ENCODE measurements at regions of chr1 and their contacts with region 1.

Region 1: GRCh38 chr1:160607011-160607671 is 27.8 kb upstream of the CD84 start:
- ATAC-seq: peak; percentile 75 to 96 (median 85)
- H3K4me3 ChIP-seq: no peak overlapping the region
- H3K27ac ChIP-seq: no peak overlapping the region
- H3K4me1 ChIP-seq: peaks cover 0 to 11% of the 10 kb centered on the region in 2 donors

Region 2: GRCh38 chr1:160428655-160429054 is 178.5 kb before region 1 on chr1:
- in situ Hi-C with region 1: loop called in 1 of 9 experiments (anchors 10 kb)
- ATAC-seq: peak; percentile 64 to 94 (median 78)
- H3K4me3 ChIP-seq: no peak overlapping the region
- H3K27ac ChIP-seq: no peak overlapping the region
- H3K4me1 ChIP-seq: peaks cover 8 to 10% of the 10 kb centered on the region in 2 donors

Region 3: GRCh38 chr1:160711602-160712311 is 104.6 kb after region 1 on chr1 and contains the start of gene CD48:
- in situ Hi-C with region 1: loop called in 1 of 9 experiments (anchors 25 kb)
- ATAC-seq: peak in 1 of 8 experiments; percentile 34
- H3K4me3 ChIP-seq: no peak within 1 kb of the TSS
- H3K27ac ChIP-seq: no peak within 1 kb of the TSS
- H3K4me1 ChIP-seq: no peaks in the 10 kb centered on the region
- total RNA-seq, gene CD48: 0.05 to 1.3 (median 0.32) TPM in 4 of 8 experiments, not detected in the others

Region 4: DNA sequence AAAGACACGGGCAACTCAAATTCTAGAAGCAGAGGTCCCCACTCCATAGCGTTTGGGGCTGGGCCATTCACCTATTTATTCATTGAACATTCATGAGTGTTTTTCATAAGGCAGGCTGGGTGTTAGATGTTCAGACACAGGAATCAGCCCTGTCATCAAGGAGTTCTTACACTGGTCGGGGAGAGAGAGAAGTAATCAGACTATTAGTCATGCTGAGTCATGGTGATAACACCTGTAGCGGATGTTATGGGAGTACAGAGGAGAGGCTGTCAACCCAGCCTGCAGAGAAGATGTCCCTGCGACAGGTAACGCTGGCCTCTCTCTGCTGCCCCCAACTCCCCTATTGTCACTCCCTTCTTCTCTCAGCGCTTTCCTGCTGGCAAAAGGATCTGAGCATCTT is 206.1 kb after region 1 on chr1:
- in situ Hi-C with region 1: no loop called
- ATAC-seq: peak in 1 of 8 experiments; percentile 34
- H3K4me3 ChIP-seq: no peak overlapping the region
- H3K27ac ChIP-seq: no peak overlapping the region
- H3K4me1 ChIP-seq: peaks cover 4 to 12% of the 10 kb centered on the region in 2 donors

Region 5: DNA sequence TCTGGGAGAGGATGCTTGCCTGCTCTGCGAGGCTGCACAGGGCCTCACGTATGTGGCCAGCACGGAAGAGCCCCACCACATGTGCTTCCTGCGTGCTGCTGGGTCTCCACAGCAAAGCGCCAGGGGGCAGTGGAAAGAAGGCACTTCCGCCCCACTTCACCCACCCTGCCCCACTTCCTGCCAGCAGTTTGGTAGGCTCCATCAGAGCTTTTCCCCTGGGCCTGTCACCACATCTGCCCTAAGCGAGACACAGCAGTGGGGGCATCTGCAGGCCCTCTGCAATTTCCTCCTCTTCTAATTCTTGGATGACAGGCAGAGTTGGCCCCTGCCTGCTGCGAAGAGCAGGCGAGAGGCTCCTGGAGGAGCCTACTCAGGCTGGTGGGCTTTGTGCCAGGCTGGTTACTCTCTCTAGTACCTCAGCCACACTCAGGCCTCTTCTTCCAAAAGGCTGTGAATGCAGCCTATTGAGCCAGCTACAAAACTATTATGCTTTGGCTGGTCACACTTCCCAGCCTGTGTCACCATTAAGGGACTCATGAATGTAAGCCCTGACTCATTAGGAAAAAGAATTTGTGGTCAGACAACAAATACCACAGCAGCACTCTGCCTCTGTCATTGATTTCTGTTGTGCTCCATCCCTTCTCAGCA is 230.5 kb after region 1 on chr1:
- in situ Hi-C with region 1: no loop called
- ATAC-seq: peak in 5 of 8 experiments; percentile 31 to 92 (median 75)
- H3K4me3 ChIP-seq: no peak overlapping the region
- H3K27ac ChIP-seq: no peak overlapping the region
- H3K4me1 ChIP-seq: peaks cover 0 to 20% of the 10 kb centered on the region in 2 donors